CD4-positive, alpha-beta memory T cell (primary cell): ENCODE measurements at regions of chr16 and their contacts with region 1.

Region 1: GRCh38 chr16:68146585-68146984 is 61.4 kb downstream of the NFATC3 start:
- DNase-seq: peak in 2 of 5 donors; percentile 1 to 21
- H3K4me3 ChIP-seq: no peak overlapping the region
- H3K4me3 Mint-ChIP-seq: no peak overlapping the region
- H3K27ac ChIP-seq: no peak overlapping the region
- H3K27ac Mint-ChIP-seq: peak overlapping the region in 4 of 7 donors; percentile 2 to 83 (median 52)
- H3K4me1 ChIP-seq: peaks cover 36% of the 10 kb centered on the region
- H3K4me1 Mint-ChIP-seq: peaks cover 29 to 49% (median 40%) of the 10 kb centered on the region in 4 donors
- H3K27me3 ChIP-seq: no peaks in the 10 kb centered on the region
- H3K27me3 Mint-ChIP-seq: no peaks in the 10 kb centered on the region

Region 2: GRCh38 chr16:67816240-67817031 is 330.1 kb before region 1 on chr16:
- CTCF ChIA-PET with region 1: no interaction called
- POLR2A ChIA-PET with region 1: no interaction called
- intact Hi-C with region 1: no loop called
- DNase-seq: peak; percentile 83 to 92 (median 85)
- H3K4me3 ChIP-seq: no peak overlapping the region
- H3K4me3 Mint-ChIP-seq: peak overlapping the region in 1 of 8 donors; percentile 61
- H3K27ac ChIP-seq: no peak overlapping the region
- H3K27ac Mint-ChIP-seq: peak overlapping the region in 4 of 7 donors; percentile 75 to 92 (median 82)
- H3K4me1 ChIP-seq: no peaks in the 10 kb centered on the region
- H3K4me1 Mint-ChIP-seq: peaks cover 0 to 8% (median 5%) of the 10 kb centered on the region in 4 donors
- H3K27me3 ChIP-seq: no peaks in the 10 kb centered on the region
- H3K27me3 Mint-ChIP-seq: no peaks in the 10 kb centered on the region

Region 3: DNA sequence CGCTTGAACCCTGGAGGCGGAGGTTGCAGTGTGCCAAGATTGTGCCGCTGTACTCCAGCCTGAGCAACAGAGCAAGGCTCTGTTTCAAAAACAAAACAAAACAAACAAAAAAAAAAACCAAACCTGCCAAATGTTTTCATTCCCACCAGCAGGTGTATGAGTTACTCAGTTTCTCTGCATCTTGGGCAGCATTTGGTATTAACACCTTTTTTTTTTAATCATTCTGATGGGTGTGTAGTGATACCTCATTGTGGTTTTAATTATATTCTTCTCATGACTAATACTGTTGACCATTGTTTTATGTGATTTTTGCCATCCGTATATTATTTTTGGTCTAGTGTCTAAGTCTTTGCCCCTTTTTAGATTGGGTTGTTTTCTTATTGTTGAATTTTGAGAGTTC is 46.1 kb before region 1 on chr16:
- CTCF ChIA-PET with region 1: no interaction called
- POLR2A ChIA-PET with region 1: no interaction called
- intact Hi-C with region 1: loop called (anchors 5 kb)
- DNase-seq: no peak
- H3K4me3 ChIP-seq: no peak overlapping the region
- H3K4me3 Mint-ChIP-seq: peak overlapping the region in 6 of 8 donors; percentile 2 to 72 (median 48)
- H3K27ac ChIP-seq: no peak overlapping the region
- H3K27ac Mint-ChIP-seq: peak overlapping the region in 6 of 7 donors; percentile 5 to 80 (median 21)
- H3K4me1 ChIP-seq: peaks cover 80% of the 10 kb centered on the region
- H3K4me1 Mint-ChIP-seq: peaks cover 53 to 92% (median 69%) of the 10 kb centered on the region in 4 donors
- H3K27me3 ChIP-seq: no peaks in the 10 kb centered on the region
- H3K27me3 Mint-ChIP-seq: no peaks in the 10 kb centered on the region

Region 4: GRCh38 chr16:68179196-68179795 is 32.7 kb after region 1 on chr16:
- CTCF ChIA-PET with region 1: no interaction called
- POLR2A ChIA-PET with region 1: no interaction called
- intact Hi-C with region 1: no loop called
- DNase-seq: no peak
- H3K4me3 ChIP-seq: no peak overlapping the region
- H3K4me3 Mint-ChIP-seq: no peak overlapping the region
- H3K27ac ChIP-seq: no peak overlapping the region
- H3K27ac Mint-ChIP-seq: peak overlapping the region in 2 of 7 donors; percentile 1 to 57
- H3K4me1 ChIP-seq: no peaks in the 10 kb centered on the region
- H3K4me1 Mint-ChIP-seq: peaks cover 3 to 23% (median 15%) of the 10 kb centered on the region in 4 donors
- H3K27me3 ChIP-seq: no peaks in the 10 kb centered on the region
- H3K27me3 Mint-ChIP-seq: no peaks in the 10 kb centered on the region